ENCODE measurements at regions of chr1 and their contacts with region 1.

Region 1: DNA sequence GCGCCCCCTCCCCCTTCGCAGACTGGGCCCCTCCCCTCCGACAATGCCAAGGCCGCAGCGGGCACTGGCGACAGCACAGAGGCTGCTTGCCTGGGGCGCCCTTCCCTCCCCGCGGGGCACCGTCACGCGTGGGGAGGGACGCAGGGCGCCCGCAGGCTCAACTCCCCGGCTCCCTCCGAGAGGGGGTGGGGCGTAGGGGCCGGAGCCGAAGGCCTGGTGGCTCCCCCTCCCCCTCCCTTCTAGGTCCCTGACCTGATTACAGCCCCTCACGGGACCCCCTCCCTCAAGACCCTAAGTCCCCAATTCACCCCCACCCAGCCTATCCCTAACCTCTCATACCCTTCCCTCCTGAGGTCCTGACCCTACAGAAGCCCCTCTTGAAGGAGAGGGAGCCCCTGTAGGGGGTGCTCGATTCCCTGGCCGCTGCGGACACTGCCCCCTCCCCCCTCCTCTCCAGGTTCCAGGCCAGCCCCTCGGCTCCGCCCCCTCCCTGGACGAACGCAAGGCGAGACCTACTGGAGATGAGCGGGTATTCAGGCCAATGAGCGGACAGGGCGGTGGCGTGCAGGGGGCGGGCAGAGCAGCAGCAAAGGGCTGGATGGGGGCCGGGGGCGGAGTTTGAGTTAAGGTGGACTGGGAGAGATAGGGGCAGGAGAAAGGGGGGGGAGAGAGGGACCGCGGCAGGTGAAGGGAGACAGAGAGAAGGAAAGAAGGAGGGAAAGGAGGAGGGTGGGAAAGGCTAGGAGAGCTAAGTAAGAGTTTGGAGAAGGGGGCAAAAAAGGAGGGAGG is 733 bp upstream of the ZBTB7B start:
- DNase-seq: peak; percentile 91 to 98 (median 96)
- H3K4me3 ChIP-seq: peak overlapping the region; percentile 95
- H3K4me3 Mint-ChIP-seq: peak overlapping the region; percentile 93 to 97 (median 95)
- H3K27ac ChIP-seq: peak overlapping the region; percentile 90
- H3K27ac Mint-ChIP-seq: peak overlapping the region; percentile 90 to 98 (median 94)
- H3K4me1 ChIP-seq: peaks cover 42% of the 10 kb centered on the region
- H3K4me1 Mint-ChIP-seq: peaks cover 47 to 58% (median 54%) of the 10 kb centered on the region in 3 donors
- H3K27me3 ChIP-seq: no peaks in the 10 kb centered on the region
- H3K27me3 Mint-ChIP-seq: no peaks in the 10 kb centered on the region

Region 2: GRCh38 chr1:154607609-154608396 is 394.1 kb before region 1 on chr1 and contains the start of gene ADAR:
- CTCF ChIA-PET with region 1: no interaction called
- POLR2A ChIA-PET with region 1: interaction called, 10 read pairs
- DNase-seq: peak; percentile 80 to 94 (median 89)
- H3K4me3 ChIP-seq: peak within 1 kb of the TSS; percentile 98
- H3K4me3 Mint-ChIP-seq: peak within 1 kb of the TSS; percentile 96 to 100 (median 99)
- H3K27ac ChIP-seq: peak within 1 kb of the TSS; percentile 93
- H3K27ac Mint-ChIP-seq: peak within 1 kb of the TSS; percentile 97 to 100 (median 99)
- H3K4me1 ChIP-seq: peaks cover 62% of the 10 kb centered on the region
- H3K4me1 Mint-ChIP-seq: peaks cover 69 to 87% (median 84%) of the 10 kb centered on the region in 3 donors
- H3K27me3 ChIP-seq: no peaks in the 10 kb centered on the region
- H3K27me3 Mint-ChIP-seq: no peaks in the 10 kb centered on the region
- total RNA-seq, gene ADAR: 223 TPM

Region 3: GRCh38 chr1:154936555-154937084 is 65.2 kb before region 1 on chr1 and contains the start of gene PMVK:
- CTCF ChIA-PET with region 1: interaction called, 10 read pairs
- POLR2A ChIA-PET with region 1: interaction called, 4 read pairs
- DNase-seq: peak; percentile 92 to 98 (median 97)
- H3K4me3 ChIP-seq: peak within 1 kb of the TSS; percentile 77
- H3K4me3 Mint-ChIP-seq: peak within 1 kb of the TSS; percentile 94 to 100 (median 98)
- H3K27ac ChIP-seq: peak within 1 kb of the TSS; percentile 97
- H3K27ac Mint-ChIP-seq: peak within 1 kb of the TSS; percentile 99 to 100 (median 99)
- H3K4me1 ChIP-seq: peaks cover 44% of the 10 kb centered on the region
- H3K4me1 Mint-ChIP-seq: peaks cover 47 to 66% (median 57%) of the 10 kb centered on the region in 3 donors
- H3K27me3 ChIP-seq: no peaks in the 10 kb centered on the region
- H3K27me3 Mint-ChIP-seq: no peaks in the 10 kb centered on the region
- total RNA-seq, gene PMVK: 44.7 to 45.2 TPM

Region 4: DNA sequence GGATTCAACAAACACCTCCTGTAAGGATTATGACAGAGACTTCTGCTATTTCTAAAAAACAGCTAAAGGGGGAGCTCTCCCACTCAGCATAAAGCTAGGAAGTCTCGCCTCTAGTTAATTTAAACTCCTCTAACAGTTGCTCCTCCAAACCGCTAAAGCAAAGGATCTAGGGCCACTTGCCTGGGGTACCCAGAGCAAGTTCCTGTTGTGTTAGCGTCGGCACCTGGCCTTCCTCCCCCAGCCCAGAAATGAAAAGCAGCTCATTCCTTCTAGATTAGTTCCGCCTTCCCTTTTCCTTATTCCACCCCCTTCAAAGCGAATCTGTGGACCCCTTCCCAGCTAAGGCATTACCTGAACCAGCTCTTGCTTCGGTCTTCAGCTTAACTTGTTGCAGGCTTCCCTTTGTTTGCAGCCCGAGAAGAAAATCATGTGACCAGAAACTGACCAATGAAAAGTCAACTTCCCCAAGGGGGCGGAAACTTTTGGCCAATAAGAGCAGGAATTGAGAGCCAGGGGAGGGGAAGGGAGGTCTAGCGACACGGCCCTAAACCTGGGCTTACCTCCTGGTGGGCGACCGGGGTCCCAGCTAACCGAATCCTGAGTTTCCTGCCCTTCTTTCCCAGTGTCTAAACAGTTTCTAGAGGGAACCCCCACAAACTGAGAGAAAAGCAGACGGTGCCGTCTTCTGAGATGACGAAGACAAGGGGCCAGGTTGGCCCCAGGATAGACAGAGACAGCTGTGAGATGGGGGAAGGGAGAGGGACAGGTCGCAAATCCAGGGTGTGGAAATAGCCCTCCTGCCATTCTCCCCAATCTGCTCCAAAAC is 45.9 kb before region 1 on chr1 and contains the start of gene PBXIP1:
- CTCF ChIA-PET with region 1: interaction called, 22 read pairs
- POLR2A ChIA-PET with region 1: interaction called, 7 read pairs
- DNase-seq: peak; percentile 67 to 94 (median 89)
- H3K4me3 ChIP-seq: peak within 1 kb of the TSS; percentile 85
- H3K4me3 Mint-ChIP-seq: peak within 1 kb of the TSS; percentile 95 to 99 (median 97)
- H3K27ac ChIP-seq: peak within 1 kb of the TSS; percentile 100
- H3K27ac Mint-ChIP-seq: peak within 1 kb of the TSS; percentile 99 to 100 (median 100)
- H3K4me1 ChIP-seq: peaks cover 66% of the 10 kb centered on the region
- H3K4me1 Mint-ChIP-seq: peaks cover 63 to 90% (median 77%) of the 10 kb centered on the region in 3 donors
- H3K27me3 ChIP-seq: no peaks in the 10 kb centered on the region
- H3K27me3 Mint-ChIP-seq: peaks cover 0 to 9% of the 10 kb centered on the region in 2 donors
- total RNA-seq, gene PBXIP1: 35.9 to 36.1 TPM

Region 5: GRCh38 chr1:154961497-154962262 is 40.2 kb before region 1 on chr1 and contains the start of gene PYGO2:
- CTCF ChIA-PET with region 1: interaction called, 22 read pairs
- POLR2A ChIA-PET with region 1: interaction called, 6 read pairs
- DNase-seq: peak; percentile 74 to 86 (median 82)
- H3K4me3 ChIP-seq: peak within 1 kb of the TSS; percentile 64
- H3K4me3 Mint-ChIP-seq: peak within 1 kb of the TSS; percentile 92 to 98 (median 96)
- H3K27ac ChIP-seq: peak within 1 kb of the TSS; percentile 92
- H3K27ac Mint-ChIP-seq: peak within 1 kb of the TSS; percentile 94 to 99 (median 98)
- H3K4me1 ChIP-seq: peaks cover 28% of the 10 kb centered on the region
- H3K4me1 Mint-ChIP-seq: peaks cover 29 to 57% (median 47%) of the 10 kb centered on the region in 3 donors
- H3K27me3 ChIP-seq: no peaks in the 10 kb centered on the region
- H3K27me3 Mint-ChIP-seq: peaks cover 0 to 1% of the 10 kb centered on the region in 2 donors
- total RNA-seq, gene PYGO2: 34.2 to 35.3 TPM

Region 6: GRCh38 chr1:154974063-154974807 is 27.6 kb before region 1 on chr1 and contains the start of gene CKS1B:
- CTCF ChIA-PET with region 1: interaction called, 15 read pairs
- POLR2A ChIA-PET with region 1: interaction called, 11 read pairs
- DNase-seq: peak; percentile 93 to 99 (median 98)
- H3K4me3 ChIP-seq: peak within 1 kb of the TSS; percentile 95
- H3K4me3 Mint-ChIP-seq: no peak within 1 kb of the TSS
- H3K27ac ChIP-seq: peak within 1 kb of the TSS; percentile 95
- H3K27ac Mint-ChIP-seq: no peak within 1 kb of the TSS
- H3K4me1 ChIP-seq: peaks cover 40% of the 10 kb centered on the region
- H3K4me1 Mint-ChIP-seq: peaks cover 24 to 34% (median 28%) of the 10 kb centered on the region in 3 donors
- H3K27me3 ChIP-seq: no peaks in the 10 kb centered on the region
- H3K27me3 Mint-ChIP-seq: no peaks in the 10 kb centered on the region
- total RNA-seq, gene CKS1B: 125 to 126 TPM

Region 7: DNA sequence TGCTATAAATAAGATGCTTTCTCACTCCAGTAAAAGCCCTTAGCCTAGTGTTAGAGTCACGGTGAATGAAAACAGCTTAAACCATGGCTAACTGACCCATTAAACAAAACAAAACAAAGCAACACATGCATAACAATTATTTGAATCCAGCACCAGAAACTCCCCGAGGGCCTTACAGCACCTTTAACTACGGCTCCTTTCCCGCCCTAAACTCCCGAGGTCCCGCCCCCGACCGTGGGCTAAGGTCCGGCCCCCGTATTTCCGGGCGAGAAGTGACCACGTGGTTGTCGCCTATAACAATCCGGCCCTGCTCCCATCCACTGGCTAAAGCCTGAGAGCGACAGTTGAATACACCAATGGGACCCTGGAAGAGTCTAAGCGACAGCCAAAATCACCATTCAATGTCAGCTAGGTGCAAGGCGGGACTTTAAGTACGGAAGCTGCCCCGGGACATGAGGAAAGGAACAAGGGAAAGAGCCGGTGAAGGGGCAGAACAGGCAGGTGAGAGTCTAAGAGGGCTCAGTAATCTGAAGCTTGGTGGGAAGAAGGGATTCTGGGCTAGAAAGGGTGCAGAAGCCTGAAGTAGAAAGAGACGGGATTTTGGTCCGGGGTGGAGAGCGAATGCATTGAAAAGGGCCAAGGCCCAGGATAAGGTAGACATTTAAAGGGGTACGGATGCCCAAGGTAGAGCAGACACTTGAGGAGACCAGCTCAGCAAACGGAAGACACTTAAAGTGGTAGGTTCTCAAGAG is 18.8 kb before region 1 on chr1 and contains the start of gene FLAD1:
- CTCF ChIA-PET with region 1: interaction called, 74 read pairs
- POLR2A ChIA-PET with region 1: interaction called, 16 read pairs
- DNase-seq: peak; percentile 92 to 97 (median 96)
- H3K4me3 ChIP-seq: peak within 1 kb of the TSS; percentile 78
- H3K4me3 Mint-ChIP-seq: no peak within 1 kb of the TSS
- H3K27ac ChIP-seq: peak within 1 kb of the TSS; percentile 76
- H3K27ac Mint-ChIP-seq: peak within 1 kb of the TSS in 3 of 8 donors; percentile 61 to 95 (median 62)
- H3K4me1 ChIP-seq: peaks cover 15% of the 10 kb centered on the region
- H3K4me1 Mint-ChIP-seq: peaks cover 0 to 9% (median 2%) of the 10 kb centered on the region in 3 donors
- H3K27me3 ChIP-seq: no peaks in the 10 kb centered on the region
- H3K27me3 Mint-ChIP-seq: no peaks in the 10 kb centered on the region
- total RNA-seq, gene FLAD1: 73.7 to 76.3 TPM